Endothelial cell of umbilical vein (primary cell): ENCODE measurements at regions of chr17 and their contacts with region 1.

Region 1: GRCh38 chr17:15999439-16000350 is at the starts of genes TTC19 and ZSWIM7:
- DNase-seq: peak; percentile 96
- H3K4me3 ChIP-seq: peak within 1 kb of the TSS; percentile 67 to 96 (median 82)
- H3K27ac ChIP-seq: peak within 1 kb of the TSS; percentile 90
- H3K4me1 ChIP-seq: peaks cover 20% of the 10 kb centered on the region
- H3K27me3 ChIP-seq: no peaks in the 10 kb centered on the region
- CTCF ChIP-seq: no peak
- POLR2A ChIP-seq: peak; percentile 92
- total RNA-seq, gene TTC19: 32.8 and 33.3 TPM in 2 replicates
- total RNA-seq, gene ZSWIM7: 18.0 and 21.9 TPM in 2 replicates

Region 2: GRCh38 chr17:15954222-15954621 is 45.5 kb before region 1 on chr17:
- CTCF ChIA-PET with region 1: interaction called, 19 read pairs
- POLR2A ChIA-PET with region 1: interaction called, 3 read pairs
- dilution Hi-C with region 1: no loop called
- intact Hi-C with region 1: loop called (anchors 2 kb)
- DNase-seq: peak; percentile 89
- H3K4me3 ChIP-seq: no peak overlapping the region
- H3K27ac ChIP-seq: peak overlapping the region; percentile 48
- H3K4me1 ChIP-seq: peaks cover 32% of the 10 kb centered on the region
- H3K27me3 ChIP-seq: no peaks in the 10 kb centered on the region
- CTCF ChIP-seq: peak in 1 of 2 donors; percentile 16
- POLR2A ChIP-seq: no peak

Region 3: DNA sequence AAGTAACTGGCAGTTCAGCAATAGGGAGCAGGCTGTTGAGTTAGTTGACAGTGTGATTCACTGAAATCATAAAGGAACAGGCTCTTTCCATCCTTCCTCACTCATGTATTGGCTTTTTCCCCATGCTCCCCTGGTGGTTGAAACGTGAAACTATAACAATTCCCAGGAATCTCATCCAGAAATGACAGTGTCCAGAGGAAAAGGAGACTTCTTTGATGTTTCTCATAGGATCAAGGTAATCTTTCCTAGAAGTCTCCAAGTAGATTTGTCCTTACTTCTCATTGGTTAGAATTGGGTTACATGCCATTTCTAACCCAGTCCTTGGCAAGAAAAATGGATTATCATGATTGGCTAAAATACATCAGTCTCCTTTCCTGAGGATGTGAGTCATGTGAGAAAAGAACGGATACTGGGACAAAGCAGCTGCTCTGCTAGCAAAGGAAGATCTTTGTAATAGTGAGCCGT is 14.3 kb after region 1 on chr17:
- CTCF ChIA-PET with region 1: interaction called, 11 read pairs
- POLR2A ChIA-PET with region 1: interaction called, 5 read pairs
- dilution Hi-C with region 1: no loop called
- intact Hi-C with region 1: no loop called
- DNase-seq: peak; percentile 95
- H3K4me3 ChIP-seq: no peak overlapping the region
- H3K27ac ChIP-seq: peak overlapping the region; percentile 84
- H3K4me1 ChIP-seq: peaks cover 34% of the 10 kb centered on the region
- H3K27me3 ChIP-seq: no peaks in the 10 kb centered on the region
- CTCF ChIP-seq: peak; percentile 53 to 54
- POLR2A ChIP-seq: peak; percentile 3